Activated T-helper 1 cell treated with anti-CD3 and anti-CD28 coated beads, Interleukin-12 subunit alpha, Interleukin-12 subunit beta, Interleukin-2, Interleukin-4 antibody, amounts not matched to agents 30 ng/mL and 10 ng/mL and 1 ng/mL, durations not matched to agents 14 hours and 24 hours and 36 hours (primary cell): ENCODE measurements at regions of chr7 and their contacts with region 1.

Region 1: DNA sequence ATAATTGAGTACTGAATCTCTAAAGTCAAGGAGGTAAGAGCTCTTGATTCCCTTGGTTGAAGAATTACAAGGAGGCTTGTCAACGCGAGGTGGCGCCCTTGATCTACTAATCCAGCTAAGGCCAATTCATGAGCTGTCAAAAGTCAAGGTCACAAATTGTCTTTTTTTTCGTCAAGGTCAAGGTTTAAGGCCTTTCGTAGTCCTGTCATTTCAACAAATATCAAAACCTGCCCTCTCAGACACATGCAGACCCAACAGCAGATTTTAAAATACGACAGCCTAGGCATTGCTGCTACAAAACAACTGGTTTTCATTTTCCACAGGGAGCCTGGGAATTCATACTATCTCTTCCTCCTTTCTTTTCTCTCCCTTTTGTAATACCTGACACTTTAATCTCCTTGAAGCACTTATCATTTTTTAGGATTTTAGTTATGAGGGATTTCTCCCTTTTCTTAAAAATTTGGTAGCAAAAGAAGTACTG is 3.6 kb downstream of the HOXA13 start:
- DNase-seq: peak; percentile 59
- H3K4me3 Mint-ChIP-seq: no peak overlapping the region
- H3K27ac Mint-ChIP-seq: no peak overlapping the region
- H3K4me1 Mint-ChIP-seq: no peaks in the 10 kb centered on the region
- H3K27me3 Mint-ChIP-seq: peaks cover 80% of the 10 kb centered on the region

Region 2: GRCh38 chr7:27160546-27161213 is 35.6 kb before region 1 on chr7:
- intact Hi-C with region 1: loop called (anchors 2 kb)
- DNase-seq: peak; percentile 63
- H3K4me3 Mint-ChIP-seq: peak overlapping the region; percentile 37
- H3K27ac Mint-ChIP-seq: no peak overlapping the region
- H3K4me1 Mint-ChIP-seq: peaks cover 11% of the 10 kb centered on the region
- H3K27me3 Mint-ChIP-seq: peaks cover 77% of the 10 kb centered on the region

Region 3: DNA sequence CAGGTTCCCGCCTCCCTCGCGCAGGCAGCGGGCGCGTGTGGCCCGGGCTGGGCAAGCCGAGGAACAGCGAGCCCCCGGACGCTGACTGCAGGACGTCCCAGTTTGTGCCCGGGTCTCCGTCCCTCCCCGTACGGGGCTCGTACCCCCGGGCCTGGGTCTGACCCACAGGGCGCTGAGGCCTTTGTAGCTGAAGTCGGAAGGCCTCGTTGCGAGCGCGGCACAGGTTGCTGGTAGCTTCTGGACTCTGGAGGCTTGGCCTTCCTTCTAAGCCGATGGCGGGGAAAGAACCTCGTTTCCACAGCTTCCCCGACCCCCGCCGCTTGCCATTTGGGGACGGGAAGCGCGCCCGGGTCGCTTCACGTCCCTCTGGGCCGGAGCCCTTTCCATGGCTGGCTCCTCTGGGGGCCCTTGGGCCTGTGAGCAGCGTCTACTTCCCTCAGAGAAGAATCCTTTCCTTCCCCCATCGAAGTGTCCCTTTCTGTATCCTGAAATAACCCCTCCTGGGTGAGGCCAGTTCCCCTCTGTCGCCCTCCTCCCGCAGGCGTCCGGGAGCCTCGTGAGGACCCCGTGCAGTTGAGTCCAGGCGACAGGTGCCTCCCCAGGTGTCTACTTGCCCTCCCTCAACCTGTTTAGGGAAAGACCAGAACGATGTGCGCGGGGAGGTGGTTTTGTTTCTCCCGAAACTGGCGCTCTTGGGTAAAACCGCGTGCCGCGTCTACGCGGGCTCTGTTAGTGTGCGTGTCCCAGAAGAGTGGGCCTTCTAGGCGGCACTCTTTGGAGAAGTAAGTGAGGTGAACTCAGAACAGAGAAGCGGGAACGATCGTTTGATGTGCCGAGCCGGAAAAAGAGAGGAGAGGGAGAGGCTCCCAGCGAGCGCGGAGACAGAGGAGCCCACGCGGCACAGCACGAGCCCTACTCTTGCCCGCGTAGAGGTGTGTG is 55.6 kb after region 1 on chr7:
- intact Hi-C with region 1: loop called (anchors 2 kb)
- DNase-seq: no peak
- H3K4me3 Mint-ChIP-seq: no peak overlapping the region
- H3K27ac Mint-ChIP-seq: no peak overlapping the region
- H3K4me1 Mint-ChIP-seq: no peaks in the 10 kb centered on the region
- H3K27me3 Mint-ChIP-seq: peaks cover 74% of the 10 kb centered on the region

Region 4: DNA sequence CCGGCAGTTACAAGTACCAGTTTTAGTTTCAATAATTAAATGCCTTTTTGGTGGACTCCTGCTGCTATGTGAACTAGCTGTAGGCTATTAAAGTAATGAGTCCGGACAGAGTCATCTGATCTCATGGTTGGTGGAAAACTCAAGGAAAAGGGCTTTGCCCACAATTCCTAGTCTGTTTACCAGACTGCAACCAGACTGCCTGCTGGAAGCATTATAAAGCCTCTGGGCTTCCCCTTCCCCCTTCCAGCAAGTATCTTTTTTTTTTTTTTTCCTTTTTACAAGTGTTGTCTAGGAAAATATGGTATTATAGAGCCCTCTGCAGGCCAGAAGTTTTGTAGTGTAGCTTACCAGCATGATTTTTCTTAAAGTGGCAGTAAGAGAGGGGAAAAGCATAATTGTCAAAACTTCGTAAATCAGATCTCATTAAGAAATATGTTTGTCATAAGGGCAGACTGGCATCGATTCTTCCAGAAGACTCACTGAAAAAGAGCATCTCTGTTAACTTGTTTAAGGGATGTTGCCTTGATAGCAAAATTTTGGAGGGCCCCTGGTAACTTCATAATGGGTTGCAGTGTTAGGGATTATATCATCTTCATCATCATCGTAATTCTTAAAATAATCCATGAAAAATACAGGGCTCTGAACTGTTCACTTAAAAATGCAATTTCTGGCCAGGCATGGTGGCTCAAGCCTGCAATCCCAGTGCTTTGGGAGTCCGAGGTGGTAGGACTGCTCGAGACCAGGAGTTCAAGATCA is 724.9 kb after region 1 on chr7:
- intact Hi-C with region 1: loop called (anchors 1 kb)
- DNase-seq: no peak
- H3K4me3 Mint-ChIP-seq: no peak overlapping the region
- H3K27ac Mint-ChIP-seq: no peak overlapping the region
- H3K4me1 Mint-ChIP-seq: peaks cover 10% of the 10 kb centered on the region
- H3K27me3 Mint-ChIP-seq: peaks cover 2% of the 10 kb centered on the region

Region 5: DNA sequence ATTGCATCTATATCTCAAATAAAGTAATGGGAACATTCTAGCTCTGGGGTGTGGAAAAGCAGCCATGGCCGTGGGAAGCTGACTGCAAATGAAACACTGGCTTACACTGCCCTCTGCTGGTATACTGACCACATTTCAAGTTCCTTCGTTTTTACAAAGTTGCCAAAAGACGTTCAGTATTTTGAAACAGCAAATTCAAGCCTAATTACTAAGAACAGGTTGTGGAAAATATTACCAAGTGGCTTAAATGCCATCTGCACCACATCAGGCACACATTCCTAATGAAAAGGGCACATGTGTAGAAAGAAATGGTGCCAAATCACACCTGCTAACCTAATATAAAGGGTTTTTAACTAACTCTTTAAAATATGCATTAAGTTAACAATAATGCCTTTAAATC is 900.4 kb after region 1 on chr7:
- intact Hi-C with region 1: loop called (anchors 1 kb)
- DNase-seq: no peak
- H3K4me3 Mint-ChIP-seq: no peak overlapping the region
- H3K27ac Mint-ChIP-seq: no peak overlapping the region
- H3K4me1 Mint-ChIP-seq: no peaks in the 10 kb centered on the region
- H3K27me3 Mint-ChIP-seq: peaks cover 10% of the 10 kb centered on the region

Region 6: DNA sequence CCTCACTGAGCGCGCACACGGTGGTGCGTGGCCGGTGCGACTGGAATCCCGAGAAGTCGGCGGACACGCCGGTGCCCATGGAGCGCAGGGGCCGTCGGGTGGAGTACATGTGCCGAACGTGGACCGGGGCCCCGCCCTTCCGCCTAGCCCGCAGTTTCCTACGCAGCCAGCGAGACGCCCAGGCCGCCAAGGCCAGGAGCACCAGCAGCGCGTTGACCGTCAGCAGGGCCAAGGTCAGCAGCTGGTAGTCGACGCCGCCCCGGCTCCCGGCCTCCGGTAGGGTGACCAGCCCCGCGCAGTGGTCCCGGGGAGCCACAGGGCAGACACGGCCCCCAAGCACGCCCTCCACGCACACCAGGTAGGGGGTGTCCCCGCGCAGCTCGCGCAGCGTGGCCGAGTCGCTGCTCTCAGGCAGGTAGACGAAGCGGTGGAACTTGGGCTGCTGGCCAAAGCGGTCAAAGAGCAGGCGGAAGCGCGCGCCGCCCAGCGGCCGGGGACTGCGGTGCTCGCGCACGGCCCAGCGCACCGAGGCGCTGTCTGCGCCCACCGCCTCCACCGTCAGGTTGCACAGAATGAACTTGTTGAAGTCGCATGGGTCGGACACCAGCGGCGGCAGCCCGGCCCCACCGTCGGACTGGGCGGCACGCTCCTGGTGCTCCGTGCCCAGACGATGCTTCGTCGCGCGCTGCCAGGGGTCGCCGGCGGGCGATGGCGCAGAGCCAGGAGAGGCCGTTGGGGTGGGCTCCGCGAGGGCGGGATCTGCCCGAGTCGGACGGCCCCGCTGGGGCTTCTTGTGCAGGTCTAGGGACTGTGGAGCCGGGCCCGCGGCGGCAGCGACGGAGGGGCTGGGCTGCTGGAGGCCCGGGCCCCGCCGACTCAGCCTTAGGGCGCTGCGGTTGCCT is 1759.6 kb after region 1 on chr7:
- intact Hi-C with region 1: loop called (anchors 10 kb)
- DNase-seq: no peak
- H3K4me3 Mint-ChIP-seq: no peak overlapping the region
- H3K27ac Mint-ChIP-seq: no peak overlapping the region
- H3K4me1 Mint-ChIP-seq: no peaks in the 10 kb centered on the region
- H3K27me3 Mint-ChIP-seq: peaks cover 53% of the 10 kb centered on the region